HCT116 (cell line): ENCODE measurements at regions of chr13 and their contacts with region 1.

Region 1: DNA sequence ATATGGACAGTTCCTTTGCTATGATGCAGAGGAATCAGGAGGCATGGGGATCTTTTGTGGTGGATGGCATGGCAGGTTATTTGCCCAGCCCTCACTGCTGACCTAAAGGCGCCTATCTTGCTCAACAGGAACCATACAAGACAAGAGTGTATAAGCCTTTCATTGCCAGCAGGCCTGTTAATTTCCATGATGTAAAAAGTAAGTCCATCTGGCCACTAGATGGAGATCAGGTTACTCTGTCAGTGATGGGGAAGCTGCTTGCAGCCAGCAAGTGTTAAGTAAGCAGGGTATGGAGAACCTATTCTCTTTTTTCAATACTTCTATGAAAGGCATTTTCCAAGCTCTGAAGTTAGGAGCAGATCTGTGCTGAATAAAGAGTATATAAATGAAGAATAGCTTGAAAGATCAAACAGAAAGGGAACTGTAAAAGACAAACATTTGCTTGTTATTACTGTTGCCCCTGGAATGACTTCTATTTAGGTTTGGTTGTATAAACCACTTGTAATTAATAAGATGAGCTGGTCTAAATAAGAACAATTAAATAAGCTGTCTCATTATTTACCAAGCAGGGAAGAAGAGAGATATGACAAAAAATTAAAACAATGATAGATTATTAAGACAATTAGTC is 210.9 kb downstream of the RGCC start:
- DNase-seq: peak; percentile 86
- ATAC-seq: peak; percentile 98
- H3K4me3 ChIP-seq: no peak overlapping the region
- H3K27ac ChIP-seq: no peak overlapping the region
- H3K4me1 ChIP-seq: peaks cover 4 to 9% of the 10 kb centered on the region in 2 experiments; a peak in 3 of 4 replicates
- H3K27me3 ChIP-seq: no peaks in the 10 kb centered on the region
- CTCF ChIP-seq: peak; percentile 62 to 82 (median 70)
- POLR2A ChIP-seq: no peak
- RAD21 ChIP-seq: peak; percentile 90

Region 2: GRCh38 chr13:41658056-41658661 is 10.1 kb before region 1 on chr13:
- CTCF ChIA-PET with region 1: interaction called, 12 read pairs
- POLR2A ChIA-PET with region 1: interaction called, 7 read pairs
- RAD21 ChIA-PET with region 1: no interaction called
- intact Hi-C with region 1: no loop called
- DNase-seq: no peak
- ATAC-seq: no peak
- H3K4me3 ChIP-seq: no peak overlapping the region
- H3K27ac ChIP-seq: no peak overlapping the region
- H3K4me1 ChIP-seq: no peaks in the 10 kb centered on the region
- H3K27me3 ChIP-seq: no peaks in the 10 kb centered on the region
- CTCF ChIP-seq: no peak; a peak in 1 of 6 replicates
- POLR2A ChIP-seq: no peak
- RAD21 ChIP-seq: 0 out of 2 replicates have a peak, but pooled peaks have one; percentile 12

Region 3: GRCh38 chr13:41955605-41956004 is 287.4 kb after region 1 on chr13:
- CTCF ChIA-PET with region 1: interaction called, 3 read pairs
- POLR2A ChIA-PET with region 1: no interaction called
- RAD21 ChIA-PET with region 1: no interaction called
- intact Hi-C with region 1: loop called (anchors 5 kb)
- DNase-seq: no peak
- ATAC-seq: no peak
- H3K4me3 ChIP-seq: no peak overlapping the region
- H3K27ac ChIP-seq: no peak overlapping the region
- H3K4me1 ChIP-seq: peaks cover 0 to 11% of the 10 kb centered on the region in 2 experiments; a peak in 2 of 4 replicates
- H3K27me3 ChIP-seq: no peaks in the 10 kb centered on the region
- CTCF ChIP-seq: no peak
- POLR2A ChIP-seq: no peak
- RAD21 ChIP-seq: no peak

Region 4: GRCh38 chr13:42110410-42111155 is 442.3 kb after region 1 on chr13:
- CTCF ChIA-PET with region 1: interaction called, 9 read pairs
- POLR2A ChIA-PET with region 1: no interaction called
- RAD21 ChIA-PET with region 1: no interaction called
- intact Hi-C with region 1: loop called (anchors 1 kb)
- DNase-seq: peak; percentile 43
- ATAC-seq: peak; percentile 22; the same call in 1 of the 2 replicates
- H3K4me3 ChIP-seq: no peak overlapping the region
- H3K27ac ChIP-seq: no peak overlapping the region
- H3K4me1 ChIP-seq: peaks cover 13 to 26% of the 10 kb centered on the region in 2 experiments
- H3K27me3 ChIP-seq: no peaks in the 10 kb centered on the region
- CTCF ChIP-seq: peak; percentile 45 to 81 (median 55); a peak in 4 of 6 replicates
- POLR2A ChIP-seq: no peak
- RAD21 ChIP-seq: peak; percentile 87